Endothelial cell of umbilical vein (primary cell): ENCODE measurements at regions of chr1 and their contacts with region 1.

Region 1: GRCh38 chr1:45011837-45012638 is at the start of gene UROD:
- DNase-seq: peak; percentile 97
- H3K4me3 ChIP-seq: peak within 1 kb of the TSS; percentile 70 to 94 (median 79)
- H3K27ac ChIP-seq: peak within 1 kb of the TSS; percentile 88
- H3K4me1 ChIP-seq: peaks cover 28% of the 10 kb centered on the region
- H3K27me3 ChIP-seq: no peaks in the 10 kb centered on the region
- CTCF ChIP-seq: no peak
- POLR2A ChIP-seq: peak; percentile 98
- total RNA-seq, gene UROD: 187 and 192 TPM in 2 replicates

Region 2: GRCh38 chr1:44792783-44793714 is 219.0 kb before region 1 on chr1:
- CTCF ChIA-PET with region 1: interaction called, 27 read pairs
- POLR2A ChIA-PET with region 1: interaction called, 3 read pairs
- dilution Hi-C with region 1: no loop called
- intact Hi-C with region 1: no loop called
- DNase-seq: no peak
- H3K4me3 ChIP-seq: no peak overlapping the region
- H3K27ac ChIP-seq: no peak overlapping the region
- H3K4me1 ChIP-seq: no peaks in the 10 kb centered on the region
- H3K27me3 ChIP-seq: no peaks in the 10 kb centered on the region
- CTCF ChIP-seq: no peak
- POLR2A ChIP-seq: no peak

Region 3: GRCh38 chr1:44835738-44836675 is 176.0 kb before region 1 on chr1:
- CTCF ChIA-PET with region 1: interaction called, 60 read pairs
- POLR2A ChIA-PET with region 1: interaction called, 3 read pairs
- dilution Hi-C with region 1: no loop called
- intact Hi-C with region 1: loop called (anchors 1 kb)
- DNase-seq: peak; percentile 88
- H3K4me3 ChIP-seq: no peak overlapping the region
- H3K27ac ChIP-seq: no peak overlapping the region
- H3K4me1 ChIP-seq: no peaks in the 10 kb centered on the region
- H3K27me3 ChIP-seq: no peaks in the 10 kb centered on the region
- CTCF ChIP-seq: peak; percentile 85 to 93
- POLR2A ChIP-seq: no peak

Region 4: DNA sequence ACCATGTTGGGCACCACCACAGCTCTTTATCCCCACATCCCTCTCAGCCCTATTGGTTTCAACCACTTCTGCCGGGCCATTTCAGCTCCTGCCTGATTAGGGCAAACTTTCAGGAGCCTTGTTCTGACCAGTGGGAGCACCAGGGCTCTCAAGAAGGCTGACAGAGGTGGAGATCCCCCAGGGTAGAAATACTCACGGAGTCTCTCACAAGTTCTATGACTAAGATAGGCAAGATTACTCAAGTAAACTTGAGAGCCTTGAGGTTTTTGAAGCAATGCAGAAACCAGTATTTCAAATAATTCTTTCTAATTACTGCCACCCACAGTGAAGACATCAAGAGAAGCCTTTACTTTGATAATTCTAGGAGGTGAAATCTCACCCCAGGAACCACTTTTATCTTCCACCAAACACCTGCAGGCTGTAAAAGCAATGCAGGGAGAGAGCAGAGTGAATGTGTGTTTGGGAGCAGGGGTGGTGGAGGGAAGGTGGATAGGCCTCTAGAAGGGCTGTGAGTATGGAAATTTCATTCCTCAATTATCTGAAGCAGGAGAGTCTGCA is 162.4 kb before region 1 on chr1:
- CTCF ChIA-PET with region 1: no interaction called
- POLR2A ChIA-PET with region 1: no interaction called
- dilution Hi-C with region 1: no loop called
- intact Hi-C with region 1: no loop called
- DNase-seq: no peak
- H3K4me3 ChIP-seq: no peak overlapping the region
- H3K27ac ChIP-seq: no peak overlapping the region
- H3K4me1 ChIP-seq: no peaks in the 10 kb centered on the region
- H3K27me3 ChIP-seq: no peaks in the 10 kb centered on the region
- CTCF ChIP-seq: no peak
- POLR2A ChIP-seq: no peak

Region 5: DNA sequence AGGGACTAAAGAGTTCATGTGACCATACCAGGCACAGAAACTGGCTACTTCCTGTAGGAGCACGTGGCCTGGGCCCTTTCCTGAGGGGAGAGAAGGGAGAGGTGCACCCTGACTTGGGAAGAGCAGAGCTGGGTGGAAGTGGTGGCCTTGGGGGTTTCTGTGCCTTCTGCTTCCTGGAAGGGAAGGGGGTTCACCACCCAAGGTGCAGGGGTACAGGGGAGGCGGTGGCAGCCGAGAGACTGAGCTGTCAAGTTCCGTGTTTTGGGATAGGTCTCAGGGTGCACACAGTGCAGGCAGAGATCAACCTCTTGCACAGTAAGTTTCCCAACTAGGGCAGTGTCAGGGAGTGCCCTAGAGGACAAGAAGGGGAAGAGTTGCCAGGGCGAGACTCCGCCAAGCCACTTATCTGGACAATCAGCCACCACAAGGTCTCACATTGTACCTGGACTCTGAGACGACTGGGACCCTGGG is 11.0 kb before region 1 on chr1:
- CTCF ChIA-PET with region 1: interaction called, 12 read pairs
- POLR2A ChIA-PET with region 1: no interaction called
- dilution Hi-C with region 1: no loop called
- intact Hi-C with region 1: no loop called
- DNase-seq: no peak
- H3K4me3 ChIP-seq: no peak overlapping the region
- H3K27ac ChIP-seq: no peak overlapping the region
- H3K4me1 ChIP-seq: no peaks in the 10 kb centered on the region
- H3K27me3 ChIP-seq: no peaks in the 10 kb centered on the region
- CTCF ChIP-seq: no peak
- POLR2A ChIP-seq: no peak

Region 6: GRCh38 chr1:45303582-45304310 is 291.7 kb after region 1 on chr1:
- CTCF ChIA-PET with region 1: interaction called, 556 read pairs
- POLR2A ChIA-PET with region 1: interaction called, 24 read pairs
- dilution Hi-C with region 1: no loop called
- intact Hi-C with region 1: loop called (anchors 1 kb)
- DNase-seq: peak; percentile 98
- H3K4me3 ChIP-seq: peak overlapping the region; percentile 51 to 60 (median 54)
- H3K27ac ChIP-seq: peak overlapping the region; percentile 67
- H3K4me1 ChIP-seq: peaks cover 14% of the 10 kb centered on the region
- H3K27me3 ChIP-seq: no peaks in the 10 kb centered on the region
- CTCF ChIP-seq: peak; percentile 54 to 74
- POLR2A ChIP-seq: peak; percentile 74

Region 7: GRCh38 chr1:45490626-45491486 is 478.8 kb after region 1 on chr1 and contains the start of gene TESK2:
- CTCF ChIA-PET with region 1: interaction called, 133 read pairs
- POLR2A ChIA-PET with region 1: interaction called, 3 read pairs
- dilution Hi-C with region 1: no loop called
- intact Hi-C with region 1: loop called (anchors 1 kb)
- DNase-seq: peak; percentile 100
- H3K4me3 ChIP-seq: peak within 1 kb of the TSS; percentile 53 to 63 (median 56)
- H3K27ac ChIP-seq: no peak within 1 kb of the TSS
- H3K4me1 ChIP-seq: peaks cover 6% of the 10 kb centered on the region
- H3K27me3 ChIP-seq: peaks cover 8 to 10% of the 10 kb centered on the region in 2 experiments
- CTCF ChIP-seq: peak in 1 of 2 donors; percentile 32
- POLR2A ChIP-seq: no peak
- total RNA-seq, gene TESK2: 2.1 and 2.2 TPM in 2 replicates